ENCODE measurements at regions of chr3 and their contacts with region 1.

Region 1: GRCh38 chr3:61594144-61594963 is 33.0 kb downstream of the PTPRG start:
- DNase-seq: no peak
- H3K4me3 ChIP-seq: no peak overlapping the region
- H3K27ac ChIP-seq: no peak overlapping the region
- H3K4me1 ChIP-seq: no peaks in the 10 kb centered on the region
- H3K27me3 ChIP-seq: no peaks in the 10 kb centered on the region
- CTCF ChIP-seq: no peak

Region 2: DNA sequence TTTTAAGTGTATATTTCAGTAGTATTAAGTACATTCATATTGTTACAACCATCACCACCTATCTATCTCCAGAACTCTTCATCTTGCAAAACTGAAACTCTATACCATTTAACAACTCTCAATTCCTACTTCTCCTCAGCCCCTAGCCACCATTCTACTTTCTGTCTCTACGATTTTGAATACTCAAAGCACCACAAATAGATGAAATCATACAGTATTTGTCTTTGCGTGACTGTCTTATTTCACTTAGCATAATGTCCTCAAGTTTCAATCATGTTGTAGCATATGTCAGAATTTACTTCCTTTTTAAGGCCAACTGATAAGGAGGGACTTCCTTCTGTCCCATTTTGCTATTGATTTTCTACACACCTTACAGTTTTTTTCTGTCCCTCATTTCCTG is 936.4 kb before region 1 on chr3:
- CTCF ChIA-PET with region 1: no interaction called
- POLR2A ChIA-PET with region 1: interaction called, 14 read pairs
- intact Hi-C with region 1: no loop called
- DNase-seq: no peak
- H3K4me3 ChIP-seq: no peak overlapping the region
- H3K27ac ChIP-seq: no peak overlapping the region
- H3K4me1 ChIP-seq: no peaks in the 10 kb centered on the region
- H3K27me3 ChIP-seq: no peaks in the 10 kb centered on the region
- CTCF ChIP-seq: no peak

Region 3: DNA sequence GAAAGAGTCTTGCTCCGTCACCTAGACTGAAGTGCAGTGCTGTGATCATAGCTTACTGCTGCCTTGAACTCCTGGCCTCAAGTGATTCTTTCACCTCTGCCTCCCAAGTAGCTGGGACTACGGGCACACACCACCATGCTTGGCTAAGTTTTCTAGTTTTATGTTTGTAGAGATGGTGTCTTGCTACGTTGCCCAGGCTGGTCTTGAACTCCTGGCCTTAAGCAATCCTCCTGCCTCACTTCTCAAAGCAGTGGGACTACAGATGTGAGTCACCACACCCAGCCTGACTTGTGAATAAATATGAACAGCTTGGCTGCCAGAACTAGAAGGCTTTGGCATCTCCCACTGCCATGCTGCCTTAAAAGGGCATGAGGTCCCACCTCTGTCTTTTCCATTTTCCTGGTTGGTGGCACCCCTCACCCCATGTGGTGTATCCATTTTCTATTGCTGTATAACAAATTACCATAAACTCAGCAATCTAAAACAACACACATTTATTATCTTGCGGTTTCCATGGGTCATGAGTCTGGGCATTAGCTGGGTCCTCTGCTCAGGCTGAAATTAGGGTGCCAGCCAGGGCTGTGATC is 11.3 kb after region 1 on chr3:
- CTCF ChIA-PET with region 1: no interaction called
- POLR2A ChIA-PET with region 1: no interaction called
- intact Hi-C with region 1: no loop called
- DNase-seq: no peak
- H3K4me3 ChIP-seq: no peak overlapping the region
- H3K27ac ChIP-seq: no peak overlapping the region
- H3K4me1 ChIP-seq: no peaks in the 10 kb centered on the region
- H3K27me3 ChIP-seq: no peaks in the 10 kb centered on the region
- CTCF ChIP-seq: no peak

Region 4: DNA sequence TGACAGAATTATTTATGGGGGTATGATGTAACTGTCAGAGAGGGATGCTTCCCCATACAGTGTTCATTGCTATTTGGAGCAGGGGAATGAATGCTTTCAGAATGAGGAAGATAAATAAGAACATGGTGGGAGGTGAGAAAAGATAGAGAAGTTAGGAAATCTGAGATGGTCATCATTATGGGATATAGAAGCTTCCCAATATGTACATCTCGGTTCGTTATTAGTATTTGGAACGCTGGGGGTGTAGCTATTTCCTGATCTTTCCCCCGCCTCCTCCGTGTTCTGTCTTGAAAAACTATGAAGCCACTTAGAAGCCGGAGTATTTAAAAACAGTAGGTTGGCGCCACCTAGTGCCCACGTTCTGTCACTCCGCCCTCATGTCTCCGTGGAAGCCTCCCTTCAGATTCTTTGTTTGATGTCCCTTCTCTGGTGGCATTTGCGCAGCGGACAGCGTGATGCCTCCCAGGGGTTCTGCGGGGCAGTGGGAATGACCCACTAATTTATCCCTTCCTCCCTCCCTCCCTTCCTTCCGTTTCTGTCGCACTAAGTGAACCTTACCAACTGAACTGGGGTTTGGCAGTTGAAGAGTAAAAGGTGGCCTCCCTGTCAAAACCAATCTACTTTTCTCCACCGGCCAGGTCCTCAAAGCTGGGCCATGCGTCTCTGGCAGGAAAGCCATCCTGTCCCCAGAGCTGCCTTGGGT is 594.5 kb after region 1 on chr3:
- CTCF ChIA-PET with region 1: interaction called, 10 read pairs
- POLR2A ChIA-PET with region 1: no interaction called
- intact Hi-C with region 1: no loop called
- DNase-seq: peak in 1 of 2 experiments; percentile 60
- H3K4me3 ChIP-seq: no peak overlapping the region
- H3K27ac ChIP-seq: no peak overlapping the region
- H3K4me1 ChIP-seq: no peaks in the 10 kb centered on the region
- H3K27me3 ChIP-seq: no peaks in the 10 kb centered on the region
- CTCF ChIP-seq: peak; percentile 74